Activated CD4-positive, alpha-beta T cell treated with anti-CD3 and anti-CD28 coated beads for 36 hours (primary cell): ENCODE measurements at regions of chr1 and their contacts with region 1.

Region 1: DNA sequence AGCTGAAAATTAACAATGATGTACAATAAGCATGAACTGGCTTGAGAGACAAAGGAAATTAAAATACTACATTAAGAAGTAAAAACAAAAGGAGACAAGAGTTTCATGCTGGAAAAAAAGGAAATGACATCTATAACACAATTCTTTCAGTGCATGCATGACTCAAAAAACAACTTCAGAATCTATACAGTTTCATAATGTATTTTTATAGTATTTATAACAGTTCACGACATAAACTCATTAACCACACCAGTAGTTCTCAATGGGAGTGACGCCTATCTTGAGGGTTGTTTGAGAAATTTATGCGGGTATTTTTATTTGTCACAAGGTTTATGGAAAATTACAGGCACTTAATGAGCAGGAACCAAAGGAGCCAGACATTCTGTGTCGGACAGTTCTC is 168.5 kb downstream of the SMYD3 start:
- DNase-seq: no peak
- ATAC-seq: peak; percentile 86
- H3K4me3 Mint-ChIP-seq: no peak overlapping the region
- H3K27ac Mint-ChIP-seq: peak overlapping the region; percentile 37
- H3K4me1 Mint-ChIP-seq: peaks cover 31% of the 10 kb centered on the region
- H3K27me3 Mint-ChIP-seq: no peaks in the 10 kb centered on the region

Region 2: GRCh38 chr1:246364415-246364941 is 25.9 kb after region 1 on chr1:
- CTCF ChIA-PET with region 1: no interaction called
- POLR2A ChIA-PET with region 1: no interaction called
- intact Hi-C with region 1: loop called in 1 of 2 experiments (anchors 2 kb)
- DNase-seq: peak; percentile 26
- ATAC-seq: peak; percentile 84
- H3K4me3 Mint-ChIP-seq: peak overlapping the region; percentile 23
- H3K27ac Mint-ChIP-seq: peak overlapping the region; percentile 31
- H3K4me1 Mint-ChIP-seq: peaks cover 20% of the 10 kb centered on the region
- H3K27me3 Mint-ChIP-seq: no peaks in the 10 kb centered on the region

Region 3: DNA sequence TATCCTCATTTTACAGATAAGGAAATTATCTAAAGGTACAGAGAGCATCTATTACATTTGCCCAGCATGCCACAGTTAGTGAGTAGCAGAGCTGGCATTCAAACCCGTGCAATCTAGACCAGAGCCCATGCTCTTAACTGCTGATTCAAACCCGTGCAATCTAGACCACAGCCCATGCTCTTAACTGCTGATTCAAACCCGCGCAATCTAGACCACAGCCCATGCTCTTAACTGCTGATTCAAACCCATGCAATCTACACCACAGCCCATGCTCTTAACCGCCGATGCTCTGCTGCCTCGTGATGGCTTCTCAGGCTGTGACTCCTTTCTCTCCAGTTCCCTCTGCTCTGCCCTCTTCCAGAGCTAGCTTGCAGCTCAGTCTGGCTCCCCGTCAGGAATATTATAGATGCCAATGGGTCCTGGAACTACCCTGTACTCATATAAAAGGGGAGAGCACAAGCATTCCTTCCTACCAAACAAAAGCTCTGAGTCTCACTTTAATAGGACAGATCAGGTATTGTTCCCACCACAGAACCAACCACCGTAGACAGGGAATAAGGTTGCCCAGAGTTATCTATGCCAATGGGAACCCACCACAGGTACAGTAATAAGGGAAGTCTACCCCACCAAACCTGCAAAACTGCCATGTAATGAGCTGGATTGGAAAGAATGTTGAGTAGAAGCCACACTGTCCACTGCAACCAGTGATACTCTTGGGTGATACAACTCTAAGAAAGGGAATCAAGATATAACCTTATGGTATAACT is 90.2 kb after region 1 on chr1:
- CTCF ChIA-PET with region 1: no interaction called
- POLR2A ChIA-PET with region 1: no interaction called
- intact Hi-C with region 1: loop called in 1 of 2 experiments (anchors 5 kb)
- DNase-seq: peak; percentile 69
- ATAC-seq: peak; percentile 95
- H3K4me3 Mint-ChIP-seq: no peak overlapping the region
- H3K27ac Mint-ChIP-seq: no peak overlapping the region
- H3K4me1 Mint-ChIP-seq: peaks cover 4% of the 10 kb centered on the region
- H3K27me3 Mint-ChIP-seq: no peaks in the 10 kb centered on the region